Activated naive CD4-positive, alpha-beta T cell treated with anti-CD3 and anti-CD28 coated beads, Interleukin-2, amount 10 ng/mL, durations not matched to agents 7 days and 5 days (primary cell): ENCODE measurements at regions of chr2 and their contacts with region 1.

Region 1: GRCh38 chr2:27428978-27429541 is 629 bp downstream of the NRBP1 start:
- DNase-seq: peak; percentile 83
- H3K4me3 Mint-ChIP-seq: peak overlapping the region; percentile 98
- H3K27ac Mint-ChIP-seq: peak overlapping the region; percentile 92
- H3K4me1 Mint-ChIP-seq: peaks cover 36% of the 10 kb centered on the region
- H3K27me3 Mint-ChIP-seq: peaks cover 5% of the 10 kb centered on the region

Region 2: GRCh38 chr2:27370026-27370815 is 58.8 kb before region 1 on chr2 and contains the starts of genes EIF2B4 and SNX17:
- CTCF ChIA-PET with region 1: interaction called, 11 read pairs
- DNase-seq: peak; percentile 100
- H3K4me3 Mint-ChIP-seq: peak within 1 kb of the TSS; percentile 98
- H3K27ac Mint-ChIP-seq: peak within 1 kb of the TSS; percentile 93
- H3K4me1 Mint-ChIP-seq: peaks cover 52% of the 10 kb centered on the region
- H3K27me3 Mint-ChIP-seq: no peaks in the 10 kb centered on the region

Region 3: DNA sequence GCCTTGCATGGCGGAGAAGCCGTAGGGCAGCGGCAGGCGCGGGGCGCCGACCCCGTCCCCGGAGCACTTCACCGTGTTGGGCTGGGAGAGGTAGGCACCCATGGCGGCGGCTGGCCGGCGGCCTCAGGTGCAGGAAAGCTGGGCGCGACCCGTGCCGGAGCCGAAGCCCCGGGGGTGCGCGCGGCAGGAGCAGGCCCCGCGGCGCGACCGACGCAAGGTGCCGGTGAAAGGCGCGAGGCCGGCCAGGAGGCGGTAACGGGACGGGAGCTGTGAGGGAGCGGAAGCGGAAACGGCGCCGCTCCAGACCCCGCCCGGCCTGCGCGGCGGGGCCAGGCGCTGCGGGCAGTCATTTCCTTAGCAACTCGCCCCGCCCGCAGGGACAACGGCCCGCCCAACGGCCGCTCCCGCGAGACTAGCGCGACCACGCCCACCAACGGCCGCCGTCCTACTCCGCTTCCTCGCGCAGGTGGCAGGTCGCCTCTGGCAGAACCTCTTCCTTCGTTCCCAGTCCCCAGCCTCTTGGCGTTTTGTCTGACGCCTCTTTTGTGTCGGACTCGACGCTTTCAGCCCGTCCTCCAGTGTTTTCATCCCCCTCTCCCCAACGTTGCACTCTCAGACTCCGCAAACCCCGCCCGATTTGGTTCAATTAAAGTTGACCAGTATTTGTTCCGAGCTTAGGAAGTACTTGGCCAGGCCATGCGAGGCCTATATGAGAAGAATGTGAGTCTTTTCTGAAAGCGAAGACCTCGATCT is 19.6 kb before region 1 on chr2 and contains the start of gene PPM1G:
- CTCF ChIA-PET with region 1: interaction called, 12 read pairs
- DNase-seq: peak; percentile 98
- H3K4me3 Mint-ChIP-seq: peak within 1 kb of the TSS; percentile 81
- H3K27ac Mint-ChIP-seq: peak within 1 kb of the TSS; percentile 88
- H3K4me1 Mint-ChIP-seq: peaks cover 43% of the 10 kb centered on the region
- H3K27me3 Mint-ChIP-seq: peaks cover 9% of the 10 kb centered on the region

Region 4: GRCh38 chr2:27448381-27448780 is 19.3 kb after region 1 on chr2:
- CTCF ChIA-PET with region 1: interaction called, 13 read pairs
- DNase-seq: no peak
- H3K4me3 Mint-ChIP-seq: no peak overlapping the region
- H3K27ac Mint-ChIP-seq: no peak overlapping the region
- H3K4me1 Mint-ChIP-seq: peaks cover 15% of the 10 kb centered on the region
- H3K27me3 Mint-ChIP-seq: no peaks in the 10 kb centered on the region